HepG2 (cell line): ENCODE measurements at regions of chr20 and their contacts with region 1.

Region 1: DNA sequence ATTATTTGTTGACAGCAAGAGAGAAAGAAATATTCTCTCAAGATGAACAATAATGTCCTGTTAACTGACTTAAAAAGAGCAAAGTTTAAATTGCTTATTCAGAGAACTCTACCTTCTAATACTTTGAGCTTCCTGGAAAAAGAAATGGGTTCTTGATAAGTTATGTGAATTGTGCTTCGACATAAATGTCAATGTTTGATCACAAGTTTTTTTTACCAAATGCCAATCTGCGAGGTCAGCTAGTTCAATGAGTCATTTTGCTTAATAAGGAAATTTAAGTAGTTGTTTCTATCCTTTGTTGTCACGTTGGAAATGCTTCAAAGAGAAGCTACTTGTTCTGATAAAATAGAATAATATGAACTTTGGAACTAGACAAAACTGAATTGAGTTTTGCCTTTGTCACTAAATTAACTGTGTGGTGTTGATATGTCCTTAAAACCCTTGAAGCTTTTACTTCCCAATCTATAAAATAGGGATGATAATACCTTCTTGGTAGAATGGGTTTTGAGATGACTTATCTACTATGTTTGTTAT is 642.1 kb upstream of the FLRT3 start:
- DNase-seq: peak; percentile 99
- ATAC-seq: peak; percentile 74
- H3K4me3 ChIP-seq: no peak overlapping the region; a peak in 1 of 6 replicates
- H3K27ac ChIP-seq: peak overlapping the region; percentile 73
- H3K4me1 ChIP-seq: peaks cover 76% of the 10 kb centered on the region
- H3K27me3 ChIP-seq: no peaks in the 10 kb centered on the region
- CTCF ChIP-seq: no peak
- EP300 ChIP-seq: peak in 1 of 2 experiments; percentile 98; a peak in 2 of 4 replicates
- POLR2A ChIP-seq: no peak
- RAD21 ChIP-seq: no peak

Region 2: DNA sequence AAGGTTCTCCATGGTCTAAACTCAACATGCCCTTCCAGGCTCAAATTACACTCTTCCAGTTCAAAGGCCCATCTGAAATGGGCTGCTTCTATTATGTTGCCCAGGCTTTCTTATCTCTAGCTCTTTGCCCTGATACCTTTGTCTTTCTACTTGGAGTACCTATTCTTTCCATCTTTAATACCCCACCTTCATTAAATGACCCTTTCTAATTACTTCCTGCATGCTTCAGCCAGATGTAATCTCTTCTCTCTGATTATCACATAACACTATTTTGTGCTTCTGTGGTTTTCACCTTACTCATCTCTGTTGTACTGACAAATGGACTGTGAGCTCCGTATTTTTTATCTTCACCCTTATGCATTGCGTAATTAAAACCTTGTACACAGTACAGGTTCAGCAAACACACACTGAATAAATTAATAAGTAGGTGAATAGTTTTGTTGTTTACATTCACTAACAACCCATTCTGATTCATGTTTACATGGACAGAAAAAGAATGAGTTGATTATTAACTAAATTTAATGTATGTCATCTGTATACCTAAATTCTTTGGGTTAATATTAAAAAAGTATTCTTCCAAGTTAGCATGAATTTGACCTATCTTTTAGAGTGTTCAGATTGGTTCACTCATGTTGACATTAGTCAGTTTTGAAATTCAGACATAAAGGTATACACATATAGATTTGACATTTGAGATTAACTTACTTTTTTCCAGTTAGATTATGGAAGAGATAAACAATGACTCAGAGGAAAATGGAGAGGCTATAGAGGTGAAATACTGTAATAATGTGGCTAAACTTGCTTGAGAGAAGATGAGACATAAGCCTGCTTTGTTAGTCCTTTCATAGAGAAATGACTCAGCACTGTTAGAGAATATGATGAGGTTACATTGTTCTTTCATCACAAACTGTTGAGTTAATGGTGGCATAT is 100.5 kb before region 1 on chr20:
- CTCF ChIA-PET with region 1: no interaction called
- POLR2A ChIA-PET with region 1: interaction called, 3 read pairs
- in situ Hi-C with region 1: no loop called
- intact Hi-C with region 1: loop called (anchors 1 kb)
- DNase-seq: peak; percentile 83
- ATAC-seq: peak; percentile 85
- H3K4me3 ChIP-seq: no peak overlapping the region; a peak in 1 of 6 replicates
- H3K27ac ChIP-seq: peak overlapping the region; percentile 1
- H3K4me1 ChIP-seq: peaks cover 18% of the 10 kb centered on the region
- H3K27me3 ChIP-seq: no peaks in the 10 kb centered on the region
- CTCF ChIP-seq: no peak
- EP300 ChIP-seq: peak in 1 of 2 experiments; percentile 71; a peak in 2 of 4 replicates
- POLR2A ChIP-seq: no peak
- RAD21 ChIP-seq: no peak

Region 3: DNA sequence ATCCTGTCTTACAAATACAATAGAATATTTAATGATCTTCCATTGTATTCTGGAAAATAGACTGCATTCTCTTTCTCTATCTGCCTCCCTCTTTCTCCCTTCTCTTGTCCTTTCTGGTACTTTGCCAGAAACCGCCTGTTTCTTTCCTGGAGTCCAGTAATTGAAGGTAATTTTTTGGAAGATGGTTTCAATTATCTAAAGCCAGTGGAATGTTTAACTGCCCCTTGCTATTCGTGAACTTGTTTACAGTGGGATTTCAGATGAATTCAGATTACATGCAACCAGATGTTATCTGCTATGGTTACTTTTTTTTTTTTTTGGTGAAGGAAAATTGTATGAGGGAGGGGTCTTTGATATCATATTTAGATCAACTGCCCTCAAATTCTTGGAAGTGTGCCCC is 13.4 kb after region 1 on chr20:
- CTCF ChIA-PET with region 1: no interaction called
- POLR2A ChIA-PET with region 1: interaction called, 41 read pairs
- in situ Hi-C with region 1: no loop called
- intact Hi-C with region 1: no loop called
- DNase-seq: peak; percentile 37
- ATAC-seq: no peak
- H3K4me3 ChIP-seq: no peak overlapping the region
- H3K27ac ChIP-seq: no peak overlapping the region
- H3K4me1 ChIP-seq: peaks cover 50% of the 10 kb centered on the region
- H3K27me3 ChIP-seq: no peaks in the 10 kb centered on the region
- CTCF ChIP-seq: no peak
- EP300 ChIP-seq: no peak
- POLR2A ChIP-seq: no peak
- RAD21 ChIP-seq: no peak